Activated CD4-positive, alpha-beta T cell treated with anti-CD3 and anti-CD28 coated beads for 36 hours (primary cell): ENCODE measurements at regions of chr4 and their contacts with region 1.

Region 1: GRCh38 chr4:7067452-7068278 is at the start of gene GRPEL1:
- DNase-seq: peak; percentile 100
- ATAC-seq: peak; percentile 94
- H3K4me3 Mint-ChIP-seq: peak within 1 kb of the TSS; percentile 94
- H3K27ac Mint-ChIP-seq: peak within 1 kb of the TSS; percentile 94
- H3K4me1 Mint-ChIP-seq: peaks cover 43% of the 10 kb centered on the region
- H3K27me3 Mint-ChIP-seq: peaks cover 2% of the 10 kb centered on the region
- total RNA-seq, gene GRPEL1: 81.0 to 93.0 TPM

Region 2: DNA sequence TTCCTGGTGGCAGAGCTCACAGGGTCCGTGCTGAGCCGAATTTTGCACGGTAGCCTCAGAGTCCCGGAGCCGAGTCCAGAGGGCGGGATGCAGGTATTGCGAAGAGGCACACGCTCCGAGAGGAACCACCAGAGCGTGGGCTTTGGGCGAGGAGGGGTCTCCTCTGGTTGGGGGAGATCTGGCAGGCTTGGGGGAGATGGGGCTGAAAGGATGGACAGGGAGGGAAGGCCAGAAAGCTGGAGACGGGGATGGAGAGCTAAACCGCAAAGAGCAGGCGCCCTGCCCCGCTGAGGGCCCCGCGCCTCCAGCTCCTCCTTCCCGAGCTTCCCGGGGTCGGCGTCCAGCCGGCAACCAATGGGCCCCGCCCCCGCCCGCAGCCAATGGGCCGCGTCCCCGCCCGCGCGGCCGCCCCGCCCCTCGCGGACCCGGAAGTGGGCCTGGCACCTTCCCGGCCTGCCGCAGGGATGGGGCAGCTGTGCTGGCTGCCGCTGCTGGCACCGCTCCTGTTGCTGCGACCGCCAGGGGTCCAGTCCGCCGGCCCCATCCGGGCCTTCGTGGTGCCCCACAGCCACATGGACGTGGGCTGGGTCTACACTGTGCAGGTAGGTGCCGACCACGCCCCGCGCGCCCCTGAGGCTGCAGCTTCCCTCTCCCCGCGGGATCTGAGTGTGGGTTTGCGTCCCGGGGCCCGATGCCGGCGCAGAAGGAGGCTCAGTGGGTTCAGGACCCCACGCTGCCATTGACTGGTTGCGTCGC is 492.7 kb before region 1 on chr4 and contains the start of gene MAN2B2:
- CTCF ChIA-PET with region 1: interaction called, 4 read pairs
- POLR2A ChIA-PET with region 1: no interaction called
- intact Hi-C with region 1: loop called in 1 of 2 experiments (anchors 1 kb)
- DNase-seq: peak; percentile 89
- ATAC-seq: peak; percentile 96
- H3K4me3 Mint-ChIP-seq: peak within 1 kb of the TSS; percentile 78
- H3K27ac Mint-ChIP-seq: peak within 1 kb of the TSS; percentile 74
- H3K4me1 Mint-ChIP-seq: peaks cover 6% of the 10 kb centered on the region
- H3K27me3 Mint-ChIP-seq: no peaks in the 10 kb centered on the region
- total RNA-seq, gene MAN2B2: 13.0 to 14.6 TPM

Region 3: DNA sequence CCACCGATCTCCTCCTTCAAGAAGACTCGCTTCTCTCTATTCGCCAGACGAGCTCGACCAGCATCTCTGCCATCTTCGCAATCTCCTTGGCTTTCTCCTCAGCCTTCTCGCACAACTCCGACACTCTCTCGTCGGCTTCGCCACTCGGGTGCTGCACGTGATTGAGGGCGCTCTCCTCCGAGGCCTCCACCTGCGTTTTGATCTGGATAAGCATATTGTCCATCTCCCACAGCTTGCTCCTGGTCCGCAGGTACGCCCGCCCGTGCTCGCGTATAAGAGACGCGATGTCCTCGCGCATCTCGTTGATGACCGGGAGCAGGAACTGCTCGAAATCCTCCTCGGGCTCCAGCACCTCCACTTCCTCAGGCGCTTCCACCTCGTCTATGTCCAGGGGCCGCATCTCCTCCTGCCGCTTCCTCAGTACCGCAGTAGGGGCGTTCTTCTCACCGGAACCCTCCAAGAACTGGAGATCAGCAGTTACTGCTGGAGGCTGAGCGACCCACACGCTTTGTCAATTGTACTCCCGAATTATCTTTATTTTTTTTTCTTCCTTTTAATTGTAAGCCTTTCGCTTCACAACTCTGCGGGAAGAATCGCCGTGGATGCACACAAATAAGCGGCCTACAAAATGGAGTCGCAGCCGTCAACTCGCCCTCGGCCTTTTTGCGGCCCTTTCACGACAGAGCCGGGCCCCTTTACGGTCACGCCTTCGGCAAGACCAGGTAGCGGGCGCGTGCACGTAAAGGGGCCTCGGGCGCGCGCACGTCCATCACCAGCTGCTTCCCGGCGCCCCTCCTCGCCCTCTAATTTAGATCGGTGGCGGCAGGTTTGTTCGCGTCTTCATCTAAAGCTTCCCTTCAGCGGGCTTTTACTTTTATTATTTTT is 358.2 kb before region 1 on chr4 and contains the start of gene MRFAP1L1:
- CTCF ChIA-PET with region 1: interaction called, 6 read pairs
- POLR2A ChIA-PET with region 1: interaction called, 3 read pairs
- intact Hi-C with region 1: loop called in 1 of 2 experiments (anchors 1 kb)
- DNase-seq: peak; percentile 98
- ATAC-seq: peak; percentile 73
- H3K4me3 Mint-ChIP-seq: peak within 1 kb of the TSS; percentile 98
- H3K27ac Mint-ChIP-seq: peak within 1 kb of the TSS; percentile 98
- H3K4me1 Mint-ChIP-seq: peaks cover 46% of the 10 kb centered on the region
- H3K27me3 Mint-ChIP-seq: no peaks in the 10 kb centered on the region
- total RNA-seq, gene MRFAP1L1: 36.4 to 45.0 TPM

Region 4: DNA sequence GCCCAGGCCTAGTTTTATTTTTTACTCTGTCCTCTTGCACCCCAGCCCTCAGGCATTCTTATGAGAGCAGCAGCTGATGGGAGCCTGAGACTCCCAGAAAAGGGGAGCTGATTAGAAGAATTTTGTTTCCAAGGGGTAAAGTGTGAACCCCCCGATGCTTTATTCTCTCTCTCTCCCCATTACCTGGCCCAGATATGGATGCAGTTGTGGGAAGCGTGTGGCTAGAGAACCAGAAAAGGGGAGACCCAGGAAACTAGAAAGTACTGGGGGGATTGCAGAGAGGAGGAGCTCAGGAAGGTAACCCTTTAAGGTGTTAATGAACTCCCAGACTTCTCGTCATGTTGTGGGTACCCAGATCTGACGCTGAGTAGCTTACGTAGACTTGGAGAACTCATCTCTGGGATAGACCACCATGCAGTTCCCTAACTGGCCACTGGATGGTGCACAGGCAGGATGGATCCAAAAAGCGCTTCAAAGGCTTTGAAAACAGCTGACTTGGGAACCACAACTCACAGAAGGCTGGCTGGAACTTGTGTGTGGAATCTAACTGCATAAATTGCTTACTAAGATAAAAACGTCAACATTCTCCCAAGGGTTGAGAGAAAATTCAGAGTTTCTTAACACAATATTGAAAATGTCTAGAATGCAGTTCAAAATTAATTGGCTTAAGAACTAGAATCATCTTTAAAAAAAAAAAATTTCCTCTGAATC is 93.4 kb before region 1 on chr4:
- CTCF ChIA-PET with region 1: interaction called, 16 read pairs
- POLR2A ChIA-PET with region 1: no interaction called
- intact Hi-C with region 1: loop called (anchors 1 kb)
- DNase-seq: peak; percentile 90
- ATAC-seq: peak; percentile 96
- H3K4me3 Mint-ChIP-seq: no peak overlapping the region
- H3K27ac Mint-ChIP-seq: no peak overlapping the region
- H3K4me1 Mint-ChIP-seq: peaks cover 10% of the 10 kb centered on the region
- H3K27me3 Mint-ChIP-seq: no peaks in the 10 kb centered on the region

Region 5: GRCh38 chr4:7042697-7043464 is 24.8 kb before region 1 on chr4 and contains the start of gene TADA2B:
- CTCF ChIA-PET with region 1: interaction called, 126 read pairs
- POLR2A ChIA-PET with region 1: interaction called, 16 read pairs
- intact Hi-C with region 1: loop called (anchors 1 kb)
- DNase-seq: peak; percentile 95
- ATAC-seq: peak; percentile 87
- H3K4me3 Mint-ChIP-seq: peak within 1 kb of the TSS; percentile 86
- H3K27ac Mint-ChIP-seq: peak within 1 kb of the TSS; percentile 77
- H3K4me1 Mint-ChIP-seq: peaks cover 46% of the 10 kb centered on the region
- H3K27me3 Mint-ChIP-seq: peaks cover 3% of the 10 kb centered on the region
- total RNA-seq, gene TADA2B: 9.0 to 10.6 TPM

Region 6: GRCh38 chr4:8440492-8441341 is 1373.1 kb after region 1 on chr4 and contains the starts of genes ACOX3 and TRMT44:
- CTCF ChIA-PET with region 1: no interaction called
- POLR2A ChIA-PET with region 1: no interaction called
- intact Hi-C with region 1: loop called in 1 of 2 experiments (anchors 5 kb)
- DNase-seq: peak; percentile 95
- ATAC-seq: peak; percentile 89
- H3K4me3 Mint-ChIP-seq: peak within 1 kb of the TSS; percentile 93
- H3K27ac Mint-ChIP-seq: peak within 1 kb of the TSS; percentile 99
- H3K4me1 Mint-ChIP-seq: peaks cover 75% of the 10 kb centered on the region
- H3K27me3 Mint-ChIP-seq: no peaks in the 10 kb centered on the region
- total RNA-seq, gene ACOX3: 20.5 to 29.3 TPM
- total RNA-seq, gene TRMT44: 20.1 to 24.5 TPM